ENCODE measurements at regions of chr9 and their contacts with region 1.

Region 1: DNA sequence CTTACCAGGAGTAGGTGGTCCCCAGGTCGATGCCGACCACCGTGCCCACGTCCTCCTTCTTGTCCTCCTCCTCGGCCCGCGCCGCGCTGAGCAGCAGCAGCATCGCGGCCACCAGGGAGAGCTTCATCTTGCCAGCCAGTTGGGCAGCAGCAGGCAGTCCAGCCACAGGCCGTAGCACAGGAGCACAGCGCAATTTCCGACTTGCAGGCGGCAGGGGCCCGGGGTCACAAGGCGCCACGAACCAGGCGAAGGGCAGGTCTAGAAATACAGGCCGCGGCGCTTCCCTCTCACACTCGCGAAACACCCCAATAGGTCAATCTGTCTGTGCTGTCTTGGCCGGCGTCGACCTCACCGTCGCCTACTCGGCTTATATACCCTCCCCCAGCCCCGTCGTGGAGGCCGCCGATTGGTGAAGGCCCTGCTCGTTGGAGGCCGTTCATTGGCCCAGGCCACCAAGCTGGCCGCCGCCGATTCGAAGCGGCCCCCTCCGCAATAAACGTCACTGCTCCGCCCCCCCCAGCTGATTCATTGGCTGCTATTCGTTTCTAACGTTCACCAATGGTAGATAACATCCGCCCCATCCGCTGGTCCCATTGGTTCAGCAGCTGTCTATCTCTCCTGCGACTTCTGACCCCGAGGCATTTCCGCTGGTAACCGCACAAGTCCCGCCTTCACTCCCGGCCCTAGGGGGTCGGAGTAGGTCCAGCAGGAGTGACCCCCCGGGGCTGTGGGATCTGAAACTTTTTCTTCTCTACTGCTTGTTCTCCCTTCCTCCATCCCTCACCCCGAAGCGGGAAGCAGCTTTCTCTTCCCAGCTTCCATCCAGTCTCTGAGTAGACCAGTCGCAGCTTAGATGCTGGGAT is at the start of gene HSPA5:
- DNase-seq: peak; percentile 100
- ATAC-seq: peak; percentile 89
- H3K4me3 Mint-ChIP-seq: peak within 1 kb of the TSS; percentile 90
- H3K27ac Mint-ChIP-seq: peak within 1 kb of the TSS; percentile 96
- H3K4me1 Mint-ChIP-seq: peaks cover 50% of the 10 kb centered on the region
- H3K27me3 Mint-ChIP-seq: no peaks in the 10 kb centered on the region
- total RNA-seq, gene HSPA5: 179 to 188 TPM

Region 2: GRCh38 chr9:124771021-124771866 is 470.0 kb before region 1 on chr9 and contains the start of gene NR6A1:
- CTCF ChIA-PET with region 1: interaction called, 3 read pairs
- POLR2A ChIA-PET with region 1: no interaction called
- intact Hi-C with region 1: loop called (anchors 1 to 5 kb)
- DNase-seq: peak; percentile 97
- ATAC-seq: peak; percentile 90
- H3K4me3 Mint-ChIP-seq: peak within 1 kb of the TSS; percentile 80
- H3K27ac Mint-ChIP-seq: peak within 1 kb of the TSS; percentile 74
- H3K4me1 Mint-ChIP-seq: peaks cover 29% of the 10 kb centered on the region
- H3K27me3 Mint-ChIP-seq: peaks cover 62% of the 10 kb centered on the region
- total RNA-seq, gene NR6A1: 0.82 to 1.1 TPM

Region 3: DNA sequence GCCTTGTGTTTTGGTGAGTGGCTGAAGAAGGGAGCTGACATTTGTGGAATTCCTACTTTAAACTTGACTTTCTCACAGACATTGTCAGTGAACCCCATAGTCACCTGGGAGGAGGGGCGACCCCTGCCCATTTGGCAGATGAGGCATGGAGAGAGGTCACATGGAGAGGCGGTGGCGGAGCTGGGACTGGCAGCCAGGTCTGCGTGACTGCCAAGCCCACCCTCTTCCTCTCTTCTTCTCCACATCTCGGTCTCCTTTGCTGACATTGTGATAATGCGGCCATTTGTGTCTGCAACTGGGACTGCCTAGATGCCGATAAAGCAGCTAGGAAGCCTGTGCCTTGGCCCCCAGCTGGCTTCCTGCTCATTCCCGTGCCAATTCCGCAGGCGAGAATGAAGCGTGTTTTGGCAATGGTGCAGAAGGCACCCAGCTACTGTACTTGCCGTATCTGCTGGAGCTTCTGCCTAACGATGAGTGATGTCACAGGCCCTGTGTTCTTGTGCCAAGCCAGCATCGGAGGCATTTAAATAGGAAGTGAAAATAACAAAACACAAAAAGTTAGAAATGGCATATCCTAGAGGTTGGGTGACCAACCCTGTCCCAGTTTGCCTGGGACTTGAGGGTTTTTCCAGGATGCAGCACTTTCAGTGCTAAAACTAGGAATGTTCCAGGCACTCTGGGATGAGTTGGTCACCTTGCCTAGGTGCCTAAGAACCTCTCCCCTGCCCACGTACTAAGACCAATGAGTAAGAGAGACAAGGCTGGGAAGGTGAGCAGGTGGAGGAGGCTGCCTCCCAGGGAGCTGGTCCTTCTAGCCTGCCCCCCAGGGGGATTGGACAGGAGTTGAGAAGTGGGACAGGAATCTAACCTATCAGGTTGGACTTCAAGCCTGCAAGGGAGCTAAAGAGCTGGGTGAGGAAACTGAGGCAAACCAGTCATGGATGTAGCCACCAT is 440.6 kb before region 1 on chr9:
- CTCF ChIA-PET with region 1: no interaction called
- POLR2A ChIA-PET with region 1: no interaction called
- intact Hi-C with region 1: no loop called
- DNase-seq: no peak
- ATAC-seq: no peak
- H3K4me3 Mint-ChIP-seq: no peak overlapping the region
- H3K27ac Mint-ChIP-seq: no peak overlapping the region
- H3K4me1 Mint-ChIP-seq: no peaks in the 10 kb centered on the region
- H3K27me3 Mint-ChIP-seq: peaks cover 2% of the 10 kb centered on the region

Region 4: DNA sequence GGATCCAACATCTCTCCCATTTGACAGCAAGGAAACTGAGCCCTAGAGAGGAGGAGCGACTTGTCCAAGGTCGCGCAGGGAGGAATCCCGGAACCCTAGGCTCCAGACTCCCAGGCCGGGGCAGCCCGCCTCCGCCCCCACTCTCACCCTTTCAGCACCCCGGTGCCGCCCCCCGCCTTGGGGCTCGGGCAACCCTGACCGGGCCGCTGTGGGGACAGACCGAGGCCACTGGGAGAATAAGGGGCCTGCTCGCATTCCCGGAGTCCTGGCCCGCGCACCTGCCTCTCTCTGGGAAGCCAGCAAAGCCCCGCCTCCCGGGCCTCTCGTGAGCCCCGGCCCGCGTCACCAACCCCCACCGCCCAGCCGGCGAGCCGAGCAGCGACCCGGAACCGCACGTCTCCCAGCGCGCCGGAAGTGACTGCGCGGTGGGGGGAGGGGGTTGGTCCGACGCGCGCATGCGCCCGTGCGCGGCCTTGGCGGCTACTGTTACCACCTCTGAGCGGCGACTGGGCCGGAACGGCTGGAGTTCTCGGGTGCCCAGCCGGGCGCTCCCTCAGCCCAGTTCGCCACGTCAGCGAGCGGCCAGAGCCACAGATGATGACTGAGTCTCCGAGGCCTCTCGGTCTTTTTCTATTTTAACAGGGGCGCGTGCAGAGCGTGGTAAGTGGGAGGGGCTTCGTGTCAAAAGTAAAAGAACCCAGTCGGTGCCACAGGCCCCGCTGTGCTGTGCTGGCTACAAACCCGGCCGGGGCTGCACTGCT is 300.4 kb before region 1 on chr9 and contains the start of gene GOLGA1:
- CTCF ChIA-PET with region 1: no interaction called
- POLR2A ChIA-PET with region 1: no interaction called
- intact Hi-C with region 1: loop called in 1 of 2 experiments (anchors 1 kb)
- DNase-seq: peak; percentile 96
- ATAC-seq: peak; percentile 89
- H3K4me3 Mint-ChIP-seq: peak within 1 kb of the TSS; percentile 93
- H3K27ac Mint-ChIP-seq: peak within 1 kb of the TSS; percentile 99
- H3K4me1 Mint-ChIP-seq: peaks cover 20% of the 10 kb centered on the region
- H3K27me3 Mint-ChIP-seq: no peaks in the 10 kb centered on the region
- total RNA-seq, gene GOLGA1: 17.4 to 18.3 TPM

Region 5: GRCh38 chr9:125200210-125201047 is 40.8 kb before region 1 on chr9 and contains the start of gene RABEPK:
- CTCF ChIA-PET with region 1: interaction called, 3 read pairs
- POLR2A ChIA-PET with region 1: interaction called, 13 read pairs
- intact Hi-C with region 1: loop called (anchors 1 kb)
- DNase-seq: peak; percentile 95
- ATAC-seq: peak; percentile 98
- H3K4me3 Mint-ChIP-seq: peak within 1 kb of the TSS; percentile 83
- H3K27ac Mint-ChIP-seq: peak within 1 kb of the TSS; percentile 80
- H3K4me1 Mint-ChIP-seq: peaks cover 30% of the 10 kb centered on the region
- H3K27me3 Mint-ChIP-seq: no peaks in the 10 kb centered on the region
- total RNA-seq, gene RABEPK: 29.1 to 33.1 TPM

Region 6: DNA sequence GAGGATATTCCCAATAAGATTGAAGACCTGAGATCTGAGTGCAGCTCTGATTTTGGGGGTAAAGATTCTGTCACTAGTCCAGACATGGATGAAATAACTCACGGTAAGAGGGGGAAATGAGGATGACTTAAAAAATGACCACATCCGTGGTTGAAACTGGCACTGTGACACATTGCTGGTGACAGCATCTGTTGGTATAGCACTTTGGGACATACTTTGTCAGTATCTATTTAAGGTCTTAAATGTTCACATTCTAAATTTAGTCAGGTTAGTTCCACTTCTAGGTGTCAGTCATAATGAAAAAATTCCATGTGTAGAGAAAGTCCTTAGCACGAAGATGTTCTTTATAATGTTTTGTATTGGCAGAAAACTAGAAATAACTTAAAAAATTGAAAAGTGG is 91.3 kb after region 1 on chr9:
- CTCF ChIA-PET with region 1: no interaction called
- POLR2A ChIA-PET with region 1: interaction called, 3 read pairs
- intact Hi-C with region 1: loop called (anchors 1 kb)
- DNase-seq: peak; percentile 68
- ATAC-seq: peak; percentile 95
- H3K4me3 Mint-ChIP-seq: no peak overlapping the region
- H3K27ac Mint-ChIP-seq: peak overlapping the region; percentile 51
- H3K4me1 Mint-ChIP-seq: peaks cover 16% of the 10 kb centered on the region
- H3K27me3 Mint-ChIP-seq: no peaks in the 10 kb centered on the region

Region 7: DNA sequence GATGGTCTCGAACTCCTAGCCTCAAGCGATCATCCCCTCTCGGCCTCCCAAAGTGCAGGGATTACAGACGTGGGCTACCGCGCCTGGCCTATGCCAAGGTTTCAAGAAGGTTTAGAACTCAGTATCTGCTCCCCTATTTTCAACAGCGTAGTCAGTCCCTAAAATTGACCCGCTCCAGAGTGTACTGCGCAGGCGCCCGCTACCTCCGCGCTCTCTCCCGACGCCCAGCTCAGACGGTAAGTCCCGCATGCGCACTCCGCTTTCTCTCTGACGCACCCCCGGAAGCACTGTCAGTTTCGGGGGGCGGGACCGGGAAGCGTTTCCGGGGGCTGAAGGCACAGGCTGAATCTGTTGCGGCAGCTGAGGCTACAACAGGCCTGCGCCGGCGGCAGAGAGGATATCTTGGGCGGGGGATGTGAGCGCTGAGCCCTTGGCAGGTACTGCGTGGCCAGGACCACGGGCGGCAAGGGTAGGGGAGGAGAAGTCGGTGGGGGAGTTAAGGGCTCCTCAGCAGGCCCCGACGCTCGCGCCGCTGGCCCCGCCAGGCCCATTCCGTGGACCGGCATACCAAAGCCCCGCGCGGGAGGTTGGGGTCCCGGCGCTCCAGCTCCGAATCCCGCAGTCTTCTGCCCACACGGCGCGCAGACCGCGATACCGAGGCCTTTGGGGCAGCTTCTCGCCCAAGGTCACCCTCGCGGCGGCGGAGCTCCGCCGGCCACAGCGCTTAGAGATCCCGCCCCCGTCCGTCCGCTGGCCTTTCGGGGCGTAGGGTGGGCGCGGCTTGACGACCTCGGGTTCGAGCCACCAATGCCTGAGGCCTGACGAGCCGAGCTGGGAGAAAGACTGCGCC is 1563.7 kb after region 1 on chr9 and contains the start of gene ZBTB43:
- CTCF ChIA-PET with region 1: no interaction called
- POLR2A ChIA-PET with region 1: no interaction called
- intact Hi-C with region 1: loop called in 1 of 2 experiments (anchors 10 kb)
- DNase-seq: peak; percentile 99
- ATAC-seq: peak; percentile 85
- H3K4me3 Mint-ChIP-seq: peak within 1 kb of the TSS; percentile 96
- H3K27ac Mint-ChIP-seq: peak within 1 kb of the TSS; percentile 100
- H3K4me1 Mint-ChIP-seq: peaks cover 36% of the 10 kb centered on the region
- H3K27me3 Mint-ChIP-seq: no peaks in the 10 kb centered on the region
- total RNA-seq, gene ZBTB43: 19.3 to 23.0 TPM